ENCODE measurements at regions of chr17 and their contacts with region 1.

Region 1: DNA sequence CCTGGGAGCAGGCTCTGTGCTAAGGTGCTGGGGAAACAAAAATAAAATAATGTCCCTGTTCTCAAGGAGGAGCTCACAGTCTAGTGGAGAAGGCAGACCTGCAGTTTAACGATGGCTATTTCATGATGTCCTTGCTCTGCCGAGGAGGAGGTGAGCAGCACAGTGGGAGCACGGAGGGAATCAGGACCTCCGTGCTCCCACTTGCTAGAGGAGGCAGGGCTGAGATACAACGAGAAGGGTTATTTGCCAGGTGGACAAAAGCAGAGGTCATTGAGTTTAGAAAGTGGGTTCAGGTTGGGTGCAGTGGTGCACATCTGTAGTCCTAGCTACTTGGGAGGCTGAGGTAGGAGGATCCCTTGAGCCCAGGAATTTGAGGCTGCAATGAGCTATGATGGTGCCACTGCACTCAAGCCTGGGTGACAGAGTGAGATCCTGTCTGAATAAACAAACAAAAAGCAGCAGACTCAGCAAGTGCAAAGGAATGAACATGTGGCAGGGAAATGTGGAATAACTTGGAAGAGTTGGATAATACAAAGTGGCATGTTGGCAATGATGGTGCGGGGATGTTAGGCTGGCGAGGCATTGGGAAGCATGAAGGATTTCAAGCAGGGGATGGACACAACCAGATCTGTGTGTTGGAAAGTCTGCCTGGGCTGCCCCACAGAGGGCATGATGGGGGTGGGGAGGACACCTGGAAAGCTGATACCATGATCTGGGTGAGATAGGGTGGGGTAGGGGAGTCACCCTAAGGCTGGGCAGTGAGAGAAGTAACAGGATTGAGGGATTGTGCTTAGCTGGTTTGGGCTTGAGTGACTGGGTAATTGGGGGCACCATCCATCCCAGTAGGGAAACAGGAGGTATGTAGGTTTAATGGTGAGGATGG is 12.8 kb upstream of the TNS4 start:
- DNase-seq: no peak
- ATAC-seq: no peak
- H3K4me3 ChIP-seq: no peak overlapping the region
- H3K27ac ChIP-seq: no peak overlapping the region
- H3K4me1 ChIP-seq: peaks cover 0 to 25% (median 16%) of the 10 kb centered on the region in 9 donors
- H3K27me3 ChIP-seq: peaks cover 0 to 11% (median 0%) of the 10 kb centered on the region in 7 donors
- CTCF ChIP-seq: no peak

Region 2: GRCh38 chr17:40450175-40450574 is 64.1 kb before region 1 on chr17:
- intact Hi-C with region 1: no loop called
- DNase-seq: no peak
- ATAC-seq: no peak
- H3K4me3 ChIP-seq: no peak overlapping the region
- H3K27ac ChIP-seq: peak overlapping the region in 7 of 10 donors; percentile 2 to 99 (median 72)
- H3K4me1 ChIP-seq: peaks cover 28 to 86% (median 80%) of the 10 kb centered on the region in 9 donors
- H3K27me3 ChIP-seq: no peaks in the 10 kb centered on the region
- CTCF ChIP-seq: peak; percentile 11 to 70 (median 56)

Region 3: GRCh38 chr17:40577611-40578065 is 63.4 kb after region 1 on chr17:
- intact Hi-C with region 1: loop called in 1 of 10 experiments (anchors 1 kb)
- DNase-seq: no peak
- ATAC-seq: no peak
- H3K4me3 ChIP-seq: no peak overlapping the region
- H3K27ac ChIP-seq: no peak overlapping the region
- H3K4me1 ChIP-seq: peaks cover 0 to 18% (median 2%) of the 10 kb centered on the region in 9 donors
- H3K27me3 ChIP-seq: no peaks in the 10 kb centered on the region
- CTCF ChIP-seq: no peak